ENCODE measurements at regions of chr2 and their contacts with region 1.

Region 1: DNA sequence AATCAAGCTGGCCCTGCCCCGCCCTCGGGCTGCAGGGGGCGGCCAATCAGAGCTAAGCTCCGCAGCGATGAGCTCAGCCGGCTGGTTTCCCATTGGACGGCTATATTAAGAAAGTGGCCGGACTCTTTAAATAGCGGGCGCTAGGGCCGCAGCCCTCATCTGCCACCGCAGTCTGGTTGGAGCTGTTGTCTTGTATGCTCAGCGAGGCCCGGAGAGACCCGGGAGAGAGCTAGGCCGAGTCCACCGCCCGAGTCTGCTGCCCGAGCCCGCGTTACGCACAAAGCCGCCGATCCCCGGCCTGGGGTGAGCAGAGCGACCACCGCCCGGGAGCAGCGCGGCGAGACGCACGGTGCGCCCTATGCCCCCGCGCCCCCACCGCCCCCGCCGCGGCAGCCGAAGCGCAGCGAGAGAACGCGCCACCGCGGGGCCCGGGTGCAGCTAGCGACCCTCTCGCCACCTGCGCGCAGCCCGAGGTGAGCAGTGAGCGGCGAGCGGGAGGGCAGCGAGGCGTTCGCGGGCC is at the start of gene RHOB:
- DNase-seq: peak; percentile 99
- ATAC-seq: peak; percentile 88
- H3K4me3 ChIP-seq: peak within 1 kb of the TSS; percentile 84
- H3K27ac ChIP-seq: 0 out of 2 replicates have a peak within 1 kb of the TSS, but pooled peaks have one; percentile 8
- H3K4me1 ChIP-seq: peaks cover 35% of the 10 kb centered on the region
- H3K27me3 ChIP-seq: no peaks in the 10 kb centered on the region
- CTCF ChIP-seq: no peak
- total RNA-seq, gene RHOB: 88.5 and 108 TPM in 2 replicates

Region 2: DNA sequence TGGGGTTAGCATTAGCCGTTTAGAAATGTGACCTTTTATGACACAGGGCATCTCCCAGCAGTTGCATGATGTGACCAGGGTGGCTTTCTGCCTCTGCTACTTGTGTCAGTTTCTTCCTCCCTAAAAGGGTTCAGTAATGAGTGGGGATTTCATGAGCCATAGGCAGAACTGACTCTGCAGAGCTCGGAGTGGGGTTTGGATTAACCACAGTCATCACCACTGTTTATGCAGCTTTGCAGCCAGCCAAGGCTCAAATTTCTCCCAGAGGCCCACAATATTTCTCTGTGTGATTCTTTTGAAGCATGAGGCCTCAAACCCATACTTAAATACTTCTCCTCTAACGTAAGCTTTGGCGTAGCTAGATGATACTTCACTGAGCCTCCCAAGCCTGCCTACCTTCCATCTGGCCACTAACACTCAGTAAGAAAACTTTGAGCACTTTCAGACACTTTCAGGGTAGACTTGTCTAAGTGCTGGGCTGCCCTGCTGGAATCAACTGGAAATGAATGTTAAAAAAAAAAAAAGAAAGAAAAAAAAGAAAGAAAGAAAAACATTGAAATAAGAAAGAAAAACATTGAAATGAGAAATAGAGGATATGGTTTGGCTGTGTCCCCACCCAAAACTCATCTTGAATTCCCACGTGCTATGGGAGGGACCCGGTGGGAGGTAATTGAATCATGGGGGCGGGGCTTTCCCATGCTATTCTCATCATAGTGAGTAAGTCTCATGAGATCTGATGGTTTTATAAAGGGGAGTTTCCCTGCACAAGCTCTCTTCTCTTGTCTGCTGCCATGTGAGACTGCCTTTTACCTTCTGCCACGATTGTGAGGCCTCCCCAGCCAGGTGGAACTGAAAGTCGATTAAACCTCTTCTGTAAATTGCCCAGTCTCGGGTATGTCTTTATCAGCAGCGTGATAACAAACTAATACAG is 384.1 kb before region 1 on chr2:
- CTCF ChIA-PET with region 1: interaction called, 12 read pairs
- POLR2A ChIA-PET with region 1: no interaction called
- intact Hi-C with region 1: no loop called
- DNase-seq: no peak
- ATAC-seq: no peak
- H3K4me3 ChIP-seq: no peak overlapping the region
- H3K27ac ChIP-seq: no peak overlapping the region
- H3K4me1 ChIP-seq: peaks cover 23% of the 10 kb centered on the region
- H3K27me3 ChIP-seq: no peaks in the 10 kb centered on the region
- CTCF ChIP-seq: no peak

Region 3: GRCh38 chr2:20411361-20411894 is 35.5 kb before region 1 on chr2:
- CTCF ChIA-PET with region 1: interaction called, 6 read pairs
- POLR2A ChIA-PET with region 1: interaction called, 17 read pairs
- intact Hi-C with region 1: loop called (anchors 1 kb)
- DNase-seq: peak; percentile 89
- ATAC-seq: peak; percentile 99
- H3K4me3 ChIP-seq: no peak overlapping the region
- H3K27ac ChIP-seq: no peak overlapping the region
- H3K4me1 ChIP-seq: no peaks in the 10 kb centered on the region
- H3K27me3 ChIP-seq: no peaks in the 10 kb centered on the region
- CTCF ChIP-seq: peak; percentile 90

Region 4: DNA sequence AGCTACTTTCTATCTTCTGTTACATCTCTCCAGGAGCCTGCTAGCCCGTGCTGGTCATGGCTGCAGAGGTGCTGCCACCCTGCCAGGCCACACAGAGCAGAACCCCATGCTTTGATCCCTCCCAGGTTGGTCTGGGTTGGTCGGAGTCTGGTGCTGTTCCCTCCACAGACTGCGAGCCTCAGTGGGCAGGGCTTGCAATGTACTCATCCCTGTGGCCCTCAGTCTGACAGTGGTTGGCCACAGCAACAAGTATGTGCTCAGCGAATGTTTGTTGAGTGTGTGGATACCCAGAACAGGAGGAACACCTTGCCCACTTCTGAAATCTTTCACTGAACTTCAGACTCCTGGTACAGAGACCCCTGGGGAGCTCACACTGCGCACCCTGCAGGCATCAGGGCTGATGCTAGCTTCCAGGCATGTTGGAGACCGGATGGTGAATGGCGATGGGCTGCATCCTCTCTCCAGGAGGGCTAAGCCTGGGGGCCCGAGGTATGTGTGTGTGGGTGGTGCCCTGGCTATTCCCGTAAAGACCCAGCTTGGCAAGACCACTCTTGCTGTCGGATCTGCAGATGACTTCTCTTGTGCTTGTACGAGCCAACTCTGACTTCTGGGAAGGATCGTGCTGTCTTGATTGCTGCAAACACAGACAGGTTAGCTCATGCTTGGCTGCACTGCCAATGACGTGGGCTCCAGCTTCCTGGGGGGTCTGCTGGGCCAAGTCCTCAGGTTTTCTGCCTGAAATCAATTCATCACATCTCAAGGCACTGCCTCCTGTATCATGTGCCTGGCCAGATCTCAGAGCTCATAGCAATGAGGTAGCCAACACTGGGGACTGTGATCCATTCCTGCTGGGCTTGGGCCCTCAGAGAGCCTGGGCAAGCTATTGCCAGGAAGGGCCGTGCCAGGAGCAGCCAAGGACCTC is 43.5 kb after region 1 on chr2:
- CTCF ChIA-PET with region 1: no interaction called
- POLR2A ChIA-PET with region 1: no interaction called
- intact Hi-C with region 1: no loop called
- DNase-seq: no peak
- ATAC-seq: no peak
- H3K4me3 ChIP-seq: no peak overlapping the region
- H3K27ac ChIP-seq: no peak overlapping the region
- H3K4me1 ChIP-seq: peaks cover 2% of the 10 kb centered on the region; the same call in 1 of the 2 replicates
- H3K27me3 ChIP-seq: no peaks in the 10 kb centered on the region
- CTCF ChIP-seq: no peak

Region 5: GRCh38 chr2:20593072-20594034 is 146.4 kb after region 1 on chr2:
- CTCF ChIA-PET with region 1: interaction called, 9 read pairs
- POLR2A ChIA-PET with region 1: interaction called, 7 read pairs
- intact Hi-C with region 1: loop called (anchors 5 kb)
- DNase-seq: peak; percentile 93
- ATAC-seq: peak; percentile 87
- H3K4me3 ChIP-seq: no peak overlapping the region
- H3K27ac ChIP-seq: peak overlapping the region; percentile 94
- H3K4me1 ChIP-seq: peaks cover 59% of the 10 kb centered on the region
- H3K27me3 ChIP-seq: no peaks in the 10 kb centered on the region
- CTCF ChIP-seq: peak; percentile 19; the same call in 1 of the 2 replicates

Region 6: GRCh38 chr2:20617892-20618467 is 171.0 kb after region 1 on chr2:
- CTCF ChIA-PET with region 1: no interaction called
- POLR2A ChIA-PET with region 1: interaction called, 14 read pairs
- intact Hi-C with region 1: no loop called
- DNase-seq: peak; percentile 95
- ATAC-seq: peak; percentile 94
- H3K4me3 ChIP-seq: no peak overlapping the region
- H3K27ac ChIP-seq: peak overlapping the region; percentile 86
- H3K4me1 ChIP-seq: peaks cover 25% of the 10 kb centered on the region
- H3K27me3 ChIP-seq: no peaks in the 10 kb centered on the region
- CTCF ChIP-seq: peak; percentile 32; the same call in 1 of the 2 replicates

Region 7: DNA sequence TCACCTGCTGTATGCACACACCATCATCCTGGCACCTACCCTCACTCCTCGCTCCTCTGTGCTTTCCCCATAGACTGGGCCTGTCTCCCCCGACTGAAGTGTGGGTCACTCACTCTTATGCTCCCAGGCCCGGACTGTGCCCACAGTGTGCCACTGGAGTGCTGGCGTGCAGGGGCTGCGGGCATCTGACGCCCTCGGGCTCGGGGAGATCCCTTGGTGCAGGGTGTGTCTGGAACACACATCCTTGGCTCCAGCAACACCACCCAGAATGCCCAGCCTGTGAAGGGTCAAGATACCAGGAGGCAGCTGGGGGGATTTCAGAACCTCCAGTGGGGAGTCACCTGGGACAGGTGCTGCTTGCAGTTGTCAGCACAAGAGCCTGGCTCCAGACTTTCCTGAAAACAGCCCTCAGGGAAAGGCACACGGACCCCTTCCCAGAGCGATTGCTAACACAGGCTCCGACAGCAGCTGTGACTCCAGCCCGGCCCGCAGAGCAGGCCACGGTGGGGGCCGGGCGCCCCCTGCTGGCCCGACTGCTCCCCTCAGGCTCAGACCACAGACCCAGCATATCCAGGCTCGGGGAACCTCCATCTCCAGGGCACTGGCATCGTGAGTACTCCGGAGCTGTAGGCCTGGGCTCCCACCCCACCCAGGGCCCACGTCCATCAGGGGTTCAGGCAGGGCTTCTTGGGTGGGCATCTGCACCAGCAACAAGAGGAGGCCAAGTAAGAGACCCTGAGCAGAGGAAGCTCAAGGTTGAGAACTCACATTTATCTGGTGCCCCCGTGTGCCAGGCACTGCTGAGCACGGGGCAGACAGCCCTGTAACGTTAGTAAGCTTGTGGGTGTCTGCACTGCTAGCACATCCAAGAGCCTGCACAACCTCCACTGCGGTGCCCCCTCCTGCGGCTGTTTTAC is 195.3 kb after region 1 on chr2:
- CTCF ChIA-PET with region 1: interaction called, 6 read pairs
- POLR2A ChIA-PET with region 1: interaction called, 3 read pairs
- intact Hi-C with region 1: loop called (anchors 2 kb)
- DNase-seq: peak; percentile 74
- ATAC-seq: peak; percentile 98
- H3K4me3 ChIP-seq: no peak overlapping the region
- H3K27ac ChIP-seq: no peak overlapping the region
- H3K4me1 ChIP-seq: no peaks in the 10 kb centered on the region
- H3K27me3 ChIP-seq: no peaks in the 10 kb centered on the region
- CTCF ChIP-seq: peak; percentile 92